ENCODE measurements at regions of chr21 and their contacts with region 1.

Region 1: GRCh38 chr21:33641336-33642026 is at the start of gene CRYZL1:
- DNase-seq: peak; percentile 100
- H3K4me3 ChIP-seq: peak within 1 kb of the TSS; percentile 93 to 100
- H3K27ac ChIP-seq: peak within 1 kb of the TSS; percentile 84 to 95
- H3K4me1 ChIP-seq: peaks cover 5 to 20% of the 10 kb centered on the region in 2 donors
- H3K27me3 ChIP-seq: no peaks in the 10 kb centered on the region
- CTCF ChIP-seq: no peak
- total RNA-seq, gene CRYZL1: 20.0 TPM

Region 2: DNA sequence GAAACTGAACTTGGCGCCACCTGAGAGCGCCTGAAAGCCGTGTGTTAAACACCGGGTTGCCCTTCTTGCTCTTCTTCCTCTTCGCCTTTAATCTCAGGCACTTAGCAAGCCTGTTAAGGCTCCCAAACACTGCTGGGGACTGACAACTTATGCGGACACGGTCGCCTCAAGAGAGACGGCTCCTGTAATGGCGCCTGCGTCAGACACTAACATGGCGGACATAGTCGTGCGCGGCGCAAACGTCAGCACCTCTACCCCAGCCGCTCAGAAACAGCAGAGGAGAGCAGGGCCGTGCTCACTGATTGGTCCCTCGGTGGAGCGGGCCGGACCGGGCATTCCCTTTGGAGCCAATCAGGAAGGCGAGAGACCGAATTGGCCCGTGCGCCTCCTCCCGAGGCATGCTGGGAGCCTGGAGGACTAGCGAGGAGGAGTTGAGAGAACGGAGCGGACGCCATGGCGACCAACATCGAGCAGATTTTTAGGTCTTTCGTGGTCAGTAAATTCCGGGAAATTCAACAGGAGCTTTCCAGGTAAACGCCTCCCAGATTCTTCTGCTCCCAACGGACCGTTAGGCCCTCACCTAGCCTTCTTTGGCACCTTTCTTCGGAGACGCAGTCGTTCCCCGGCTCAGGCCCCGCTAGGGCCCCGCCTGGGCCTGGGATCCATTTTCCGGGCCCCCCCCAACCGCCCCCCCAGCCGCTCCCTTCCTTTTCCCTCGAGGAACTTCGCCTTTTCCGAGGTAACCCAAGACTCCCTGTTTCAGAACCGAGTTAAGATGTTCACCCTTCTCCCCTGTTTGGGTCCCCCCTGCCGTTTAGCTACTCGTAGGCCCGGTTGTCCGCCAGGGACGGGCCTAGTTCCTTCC is 98.6 kb before region 1 on chr21 and contains the start of gene SON:
- intact Hi-C with region 1: loop called (anchors 1 kb)
- DNase-seq: peak; percentile 98 to 99
- H3K4me3 ChIP-seq: peak within 1 kb of the TSS; percentile 79 to 82
- H3K27ac ChIP-seq: peak within 1 kb of the TSS; percentile 98 to 99
- H3K4me1 ChIP-seq: peaks cover 0 to 18% of the 10 kb centered on the region in 2 donors
- H3K27me3 ChIP-seq: no peaks in the 10 kb centered on the region
- CTCF ChIP-seq: no peak
- total RNA-seq, gene SON: 179 TPM

Region 3: DNA sequence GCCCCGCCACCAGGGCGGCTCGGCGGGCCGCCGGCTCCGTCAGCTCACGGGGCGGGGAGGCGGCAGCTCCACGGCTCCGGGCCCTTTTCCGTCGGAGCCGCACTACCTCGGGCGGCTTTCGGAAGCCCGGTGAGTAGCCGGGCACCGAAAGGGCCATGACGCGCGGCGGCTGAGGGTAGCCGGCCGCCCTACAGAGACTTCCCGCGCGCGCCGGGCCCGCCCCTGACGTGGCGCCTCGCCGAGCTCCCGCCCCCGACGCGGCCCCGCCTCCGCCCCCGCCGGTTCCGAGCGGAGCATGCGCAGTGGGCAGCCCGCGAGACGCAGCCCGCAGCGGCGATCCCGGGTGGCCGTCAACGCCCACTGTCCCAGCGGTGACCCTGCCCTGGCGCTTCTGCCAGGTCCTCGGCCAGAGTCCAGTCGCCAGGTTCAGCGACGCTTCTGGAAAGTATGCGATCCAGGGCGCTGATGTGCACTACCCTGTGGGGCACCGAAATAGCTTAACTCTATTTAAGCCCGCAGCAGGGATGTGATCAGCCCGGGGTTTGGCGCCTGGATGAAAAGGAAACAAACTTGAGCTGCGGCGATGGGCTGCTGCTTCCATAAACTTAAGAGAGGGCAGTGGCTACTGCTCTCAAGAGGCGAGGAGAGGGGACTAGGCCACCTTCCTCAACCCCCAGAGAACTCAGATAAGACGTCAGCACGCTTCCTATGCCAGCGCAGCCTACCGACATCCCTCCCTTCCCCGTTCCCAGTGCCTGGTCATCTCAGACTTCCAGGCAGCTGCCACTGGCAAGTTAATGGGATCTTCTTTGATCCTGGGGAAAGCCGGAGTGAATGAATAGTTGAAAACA is 52.8 kb before region 1 on chr21 and contains the start of gene DONSON:
- intact Hi-C with region 1: loop called (anchors 2 kb)
- DNase-seq: peak; percentile 45 to 92
- H3K4me3 ChIP-seq: peak within 1 kb of the TSS; percentile 93 to 97
- H3K27ac ChIP-seq: peak within 1 kb of the TSS; percentile 90 to 96
- H3K4me1 ChIP-seq: peaks cover 0 to 9% of the 10 kb centered on the region in 2 donors
- H3K27me3 ChIP-seq: no peaks in the 10 kb centered on the region
- CTCF ChIP-seq: no peak
- total RNA-seq, gene DONSON: 0.53 TPM

Region 4: DNA sequence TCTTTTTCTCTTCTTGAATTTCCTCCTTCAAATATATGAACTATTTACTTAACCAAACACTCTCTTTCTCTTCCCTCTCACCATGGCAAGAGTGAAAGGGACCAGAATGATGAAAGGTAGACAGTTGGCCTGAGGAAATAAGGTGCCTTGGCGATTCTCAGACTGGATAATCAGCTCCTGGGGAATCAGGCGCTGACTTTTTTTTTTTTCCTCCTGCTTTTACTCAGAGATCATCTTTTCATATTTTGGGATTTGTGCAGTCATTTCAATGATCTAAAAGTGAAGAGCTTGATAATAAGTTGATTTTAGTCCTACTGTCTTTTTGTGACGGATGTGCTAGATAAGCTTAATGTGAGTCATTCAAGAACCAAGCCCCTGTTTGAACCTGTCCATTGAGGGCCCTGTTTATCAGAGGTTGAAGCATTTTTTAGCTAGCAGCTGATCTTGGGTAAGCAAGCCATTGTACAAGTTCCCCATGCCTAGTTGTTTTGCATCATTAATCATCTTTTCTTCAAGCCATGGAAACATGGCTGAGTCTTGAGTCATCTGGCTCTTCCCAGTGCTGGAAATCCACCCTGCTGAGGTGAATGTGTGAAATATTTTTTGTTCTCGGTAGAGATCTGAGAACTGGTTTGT is 41.6 kb after region 1 on chr21:
- intact Hi-C with region 1: loop called (anchors 2 kb)
- DNase-seq: no peak
- H3K4me3 ChIP-seq: peak overlapping the region in 1 of 2 donors; percentile 19
- H3K27ac ChIP-seq: peak overlapping the region; percentile 63 to 70
- H3K4me1 ChIP-seq: peaks cover 3 to 35% of the 10 kb centered on the region in 2 donors
- H3K27me3 ChIP-seq: no peaks in the 10 kb centered on the region
- CTCF ChIP-seq: no peak

Region 5: GRCh38 chr21:33761441-33762036 is 120.1 kb after region 1 on chr21:
- intact Hi-C with region 1: loop called (anchors 5 kb)
- DNase-seq: peak in 1 of 2 donors; percentile 66
- H3K4me3 ChIP-seq: peak overlapping the region in 1 of 2 donors; percentile 44
- H3K27ac ChIP-seq: peak overlapping the region; percentile 77 to 80
- H3K4me1 ChIP-seq: peaks cover 4 to 15% of the 10 kb centered on the region in 2 donors
- H3K27me3 ChIP-seq: no peaks in the 10 kb centered on the region
- CTCF ChIP-seq: no peak

Region 6: GRCh38 chr21:33894736-33895288 is 253.3 kb after region 1 on chr21:
- intact Hi-C with region 1: loop called (anchors 2 kb)
- DNase-seq: peak; percentile 36 to 89
- H3K4me3 ChIP-seq: peak overlapping the region; percentile 44 to 64
- H3K27ac ChIP-seq: no peak overlapping the region
- H3K4me1 ChIP-seq: peaks cover 2 to 16% of the 10 kb centered on the region in 2 donors
- H3K27me3 ChIP-seq: no peaks in the 10 kb centered on the region
- CTCF ChIP-seq: peak; percentile 69 to 89 (median 81)